RWPE1 (cell line): ENCODE measurements at regions of chr17 and their contacts with region 1.

Region 1: GRCh38 chr17:28763804-28764266 is 20.0 kb downstream of the TRAF4 start:
- DNase-seq: peak; percentile 61
- H3K27ac ChIP-seq: peak overlapping the region; percentile 57
- CTCF ChIP-seq: peak; percentile 87

Region 2: DNA sequence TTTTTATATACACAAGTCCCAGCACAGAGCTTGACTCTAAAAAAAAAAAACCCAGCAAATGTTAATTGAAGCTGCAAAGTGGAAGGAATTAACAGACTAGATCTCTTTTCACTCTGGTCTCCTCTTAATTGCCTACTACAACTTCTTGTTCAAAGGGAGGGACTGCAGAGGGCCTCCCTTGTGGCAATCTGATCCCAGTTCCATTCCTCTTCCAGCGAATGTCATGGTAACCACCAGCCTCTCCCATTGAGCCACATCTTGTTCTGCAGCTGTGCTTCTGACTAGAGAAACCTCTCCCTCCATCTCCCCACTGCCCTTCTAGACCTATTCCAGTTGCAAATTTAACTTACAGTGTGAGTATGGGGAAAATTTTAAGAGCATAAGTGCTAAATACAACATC is 96.0 kb before region 1 on chr17:
- CTCF ChIA-PET with region 1: interaction called, 10 read pairs
- POLR2A ChIA-PET with region 1: no interaction called
- DNase-seq: no peak
- H3K27ac ChIP-seq: no peak overlapping the region
- CTCF ChIP-seq: no peak

Region 3: DNA sequence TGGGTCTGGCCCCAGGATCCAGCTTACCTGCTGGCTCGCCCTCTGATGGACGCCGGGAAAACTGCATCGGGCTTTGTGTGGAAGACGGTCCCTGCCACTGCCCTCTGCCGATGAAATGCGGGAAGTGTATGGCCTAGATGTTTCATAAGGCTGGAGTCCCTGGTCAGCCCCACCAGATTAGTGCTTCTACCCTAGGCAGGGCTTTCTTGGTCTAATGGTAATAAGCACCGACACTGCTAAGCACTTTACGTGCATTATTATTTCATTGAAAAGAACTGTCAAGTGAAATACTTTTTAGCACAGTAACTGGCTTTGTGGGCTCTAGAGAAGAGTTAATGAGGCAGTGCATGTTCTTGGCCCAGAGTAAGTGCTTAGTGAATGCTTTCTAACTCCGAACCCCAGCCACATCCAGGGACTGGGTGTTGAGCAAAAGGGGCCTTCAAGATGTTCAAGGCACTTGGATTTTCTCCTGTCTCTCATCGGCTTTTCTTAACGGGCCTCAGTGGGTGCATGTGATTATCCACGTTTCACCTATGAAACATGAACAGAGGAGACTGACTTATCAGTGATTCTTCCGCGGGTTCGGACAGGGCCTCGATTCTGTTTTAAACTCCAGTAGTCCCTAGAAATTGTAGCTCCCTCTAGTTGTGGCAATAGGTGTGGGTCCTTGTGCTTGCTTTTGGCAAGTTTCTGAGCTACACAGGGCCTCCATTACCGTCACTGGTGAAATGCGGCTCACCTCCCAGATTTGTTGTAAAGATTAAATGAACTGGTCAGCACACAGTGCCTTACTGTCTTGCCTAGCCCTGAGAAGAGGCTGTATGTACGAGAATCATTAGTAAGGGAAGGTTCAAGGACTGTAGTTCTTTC is 13.4 kb before region 1 on chr17:
- CTCF ChIA-PET with region 1: interaction called, 18 read pairs
- POLR2A ChIA-PET with region 1: no interaction called
- DNase-seq: peak; percentile 69
- H3K27ac ChIP-seq: peak overlapping the region; percentile 100
- CTCF ChIP-seq: peak; percentile 99

Region 4: GRCh38 chr17:28878981-28879380 is 115.1 kb after region 1 on chr17:
- CTCF ChIA-PET with region 1: interaction called, 10 read pairs
- POLR2A ChIA-PET with region 1: no interaction called
- DNase-seq: peak; percentile 75
- H3K27ac ChIP-seq: peak overlapping the region; percentile 54
- CTCF ChIP-seq: no peak; the same call in 1 of the 2 replicates

Region 5: DNA sequence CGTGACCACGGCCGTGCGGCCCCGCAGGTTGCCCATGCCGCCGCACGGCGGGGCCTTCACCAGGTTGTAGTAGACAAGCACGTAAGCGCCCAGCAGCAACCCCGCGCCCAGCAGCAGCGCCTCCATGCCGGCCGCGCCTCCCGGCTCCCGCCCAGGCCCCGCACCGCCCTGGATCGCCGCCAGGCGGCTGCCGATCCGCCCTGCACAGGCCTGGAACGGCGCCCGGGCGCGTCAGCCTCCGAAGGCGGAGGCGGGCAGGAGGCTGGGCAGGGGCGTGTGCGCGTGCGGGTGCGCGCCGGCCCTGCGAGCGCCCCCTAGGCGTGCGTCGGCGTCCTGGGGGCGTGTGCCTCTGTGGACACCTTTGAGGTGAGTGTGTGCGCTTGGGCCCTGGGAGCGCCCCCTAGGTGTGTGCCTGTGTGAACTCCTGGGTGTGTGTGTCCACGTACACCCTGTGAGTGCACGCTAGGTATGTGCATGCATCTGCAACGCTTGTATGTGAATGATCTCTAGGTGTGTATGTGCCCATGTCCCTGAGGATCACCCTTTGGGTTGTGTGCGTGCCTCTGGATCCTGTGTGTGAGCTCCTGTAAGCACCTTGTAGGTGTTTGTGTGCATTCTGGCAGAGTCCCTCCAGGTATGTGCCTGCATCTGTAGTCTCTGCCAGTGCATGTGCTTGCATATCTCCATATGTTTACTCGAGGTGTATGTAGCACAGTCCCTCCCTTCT is 139.1 kb after region 1 on chr17 and contains the start of gene DHRS13:
- CTCF ChIA-PET with region 1: interaction called, 13 read pairs
- POLR2A ChIA-PET with region 1: no interaction called
- DNase-seq: peak; percentile 85
- H3K27ac ChIP-seq: peak within 1 kb of the TSS; percentile 90
- CTCF ChIP-seq: peak; percentile 97